ENCODE measurements at regions of chr1 and their contacts with region 1.

Region 1: DNA sequence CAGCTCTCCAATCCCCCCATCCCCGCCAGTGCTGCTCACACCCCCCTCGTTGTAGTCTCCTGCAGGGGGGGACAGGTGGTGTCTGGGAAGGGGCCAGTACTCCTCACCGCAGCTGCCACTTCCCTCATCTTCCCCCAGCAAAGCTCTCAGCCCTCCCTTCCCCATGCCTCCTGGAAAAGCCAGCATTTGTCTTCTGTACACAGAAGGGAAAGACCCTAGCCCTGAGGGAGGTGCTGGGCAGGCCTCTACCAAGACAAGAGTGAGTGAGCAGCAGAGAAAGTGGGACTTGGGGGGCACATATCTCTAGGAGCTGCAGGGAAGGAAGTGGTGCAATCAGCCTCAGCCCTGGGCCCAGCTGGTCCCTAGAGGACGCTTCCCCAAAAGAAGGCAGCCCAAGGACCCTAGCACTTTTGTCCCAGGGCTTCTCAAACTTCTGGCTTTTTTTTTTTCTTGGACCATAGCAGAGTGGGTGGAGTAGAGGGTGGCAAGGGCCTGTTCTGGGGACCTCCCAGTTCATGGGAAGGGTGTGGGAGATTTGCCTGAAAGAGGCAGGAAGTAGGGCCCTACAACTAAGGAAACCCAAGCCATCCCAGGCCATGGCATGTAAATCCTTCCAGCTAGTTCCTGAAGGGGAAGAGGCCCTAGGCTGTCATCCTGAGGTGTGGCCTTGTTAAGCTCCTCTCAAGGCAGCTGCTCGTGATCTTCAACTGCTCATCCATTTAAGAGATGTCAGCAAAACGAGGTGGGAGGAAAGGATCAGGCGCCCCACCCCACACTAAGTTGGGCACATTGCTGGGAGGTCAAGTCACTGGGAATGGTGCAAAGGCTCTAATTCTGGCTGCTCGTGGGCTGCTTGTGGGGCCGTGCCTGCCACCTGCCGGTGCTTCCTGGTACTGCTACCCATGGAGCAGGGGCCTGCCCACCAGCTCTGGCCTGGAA is 12.6 kb downstream of the ZC3H12A start:
- DNase-seq: peak; percentile 85
- ATAC-seq: peak; percentile 55 to 67

Region 2: GRCh38 chr1:37449936-37450335 is 37.0 kb before region 1 on chr1:
- intact Hi-C with region 1: loop called in 1 of 2 experiments (anchors 2 kb)
- DNase-seq: no peak
- ATAC-seq: no peak

Region 3: GRCh38 chr1:37723390-37724078 is 236.6 kb after region 1 on chr1:
- intact Hi-C with region 1: no loop called
- DNase-seq: no peak
- ATAC-seq: peak in 1 of 2 donors; percentile 19